ENCODE measurements at regions of chr17 and their contacts with region 1.

Region 1: GRCh38 chr17:55264645-55265298 is at the start of gene HLF:
- DNase-seq: peak; percentile 71 to 85 (median 82)
- H3K4me3 ChIP-seq: peak within 1 kb of the TSS; percentile 45 to 58
- H3K4me3 Mint-ChIP-seq: peak within 1 kb of the TSS; percentile 85 to 95 (median 88)
- H3K27ac ChIP-seq: peak within 1 kb of the TSS; percentile 22
- H3K27ac Mint-ChIP-seq: peak within 1 kb of the TSS; percentile 53 to 90 (median 85)
- H3K4me1 ChIP-seq: peaks cover 23% of the 10 kb centered on the region
- H3K4me1 Mint-ChIP-seq: peaks cover 24 to 54% (median 28%) of the 10 kb centered on the region in 4 donors
- H3K27me3 ChIP-seq: peaks cover 4% of the 10 kb centered on the region
- H3K27me3 Mint-ChIP-seq: peaks cover 7 to 11% of the 10 kb centered on the region in 2 donors
- total RNA-seq, gene HLF: 3.5 to 3.9 TPM

Region 2: GRCh38 chr17:54968262-54968987 is 296.3 kb before region 1 on chr17 and contains the starts of genes COX11 and STXBP4:
- CTCF ChIA-PET with region 1: interaction called, 3 read pairs
- POLR2A ChIA-PET with region 1: no interaction called
- intact Hi-C with region 1: loop called (anchors 1 kb)
- DNase-seq: peak; percentile 94 to 96 (median 95)
- H3K4me3 ChIP-seq: peak within 1 kb of the TSS; percentile 78 to 84
- H3K4me3 Mint-ChIP-seq: no peak within 1 kb of the TSS
- H3K27ac ChIP-seq: peak within 1 kb of the TSS; percentile 90
- H3K27ac Mint-ChIP-seq: no peak within 1 kb of the TSS
- H3K4me1 ChIP-seq: peaks cover 29% of the 10 kb centered on the region
- H3K4me1 Mint-ChIP-seq: peaks cover 8 to 23% (median 18%) of the 10 kb centered on the region in 4 donors
- H3K27me3 ChIP-seq: no peaks in the 10 kb centered on the region
- H3K27me3 Mint-ChIP-seq: no peaks in the 10 kb centered on the region
- total RNA-seq, gene COX11: 84.0 to 86.0 TPM
- total RNA-seq, gene STXBP4: 11.1 to 12.8 TPM

Region 3: DNA sequence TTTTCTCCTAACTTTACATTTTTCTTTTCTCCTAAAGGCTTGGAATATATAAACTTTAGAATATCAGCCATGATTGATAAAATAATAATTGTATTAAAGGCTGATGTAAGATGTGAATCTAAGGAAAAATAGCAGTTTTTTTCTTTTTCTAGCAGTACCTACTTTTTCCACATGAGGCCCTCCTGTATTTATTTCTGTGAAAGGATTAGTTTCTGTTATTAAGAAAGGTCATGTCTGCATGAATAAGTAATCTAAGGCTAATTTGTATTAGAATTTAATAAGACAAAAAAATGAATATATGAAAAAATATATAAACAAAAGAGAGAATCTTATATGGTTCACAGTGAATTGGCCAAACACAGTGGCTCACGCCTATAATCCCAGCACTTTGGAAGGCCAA is 210.9 kb before region 1 on chr17:
- CTCF ChIA-PET with region 1: interaction called, 4 read pairs
- POLR2A ChIA-PET with region 1: interaction called, 4 read pairs
- intact Hi-C with region 1: loop called (anchors 10 kb)
- DNase-seq: peak in 3 of 5 donors; percentile 12 to 22 (median 18)
- H3K4me3 ChIP-seq: no peak overlapping the region
- H3K4me3 Mint-ChIP-seq: no peak overlapping the region
- H3K27ac ChIP-seq: no peak overlapping the region
- H3K27ac Mint-ChIP-seq: peak overlapping the region in 1 of 7 donors; percentile 29
- H3K4me1 ChIP-seq: no peaks in the 10 kb centered on the region
- H3K4me1 Mint-ChIP-seq: no peaks in the 10 kb centered on the region
- H3K27me3 ChIP-seq: no peaks in the 10 kb centered on the region
- H3K27me3 Mint-ChIP-seq: no peaks in the 10 kb centered on the region

Region 4: GRCh38 chr17:55230716-55231115 is 34.1 kb before region 1 on chr17:
- CTCF ChIA-PET with region 1: interaction called, 109 read pairs
- POLR2A ChIA-PET with region 1: interaction called, 119 read pairs
- intact Hi-C with region 1: no loop called
- DNase-seq: no peak
- H3K4me3 ChIP-seq: no peak overlapping the region
- H3K4me3 Mint-ChIP-seq: no peak overlapping the region
- H3K27ac ChIP-seq: no peak overlapping the region
- H3K27ac Mint-ChIP-seq: peak overlapping the region in 2 of 7 donors; percentile 13 to 48
- H3K4me1 ChIP-seq: no peaks in the 10 kb centered on the region
- H3K4me1 Mint-ChIP-seq: peaks cover under 1 to 6% (median 2%) of the 10 kb centered on the region in 4 donors
- H3K27me3 ChIP-seq: no peaks in the 10 kb centered on the region
- H3K27me3 Mint-ChIP-seq: peaks cover 0 to 1% of the 10 kb centered on the region in 2 donors

Measured in CD4-positive, alpha-beta memory T cell (primary cell).